ENCODE measurements at regions of chr20 and their contacts with region 1.

Region 1: GRCh38 chr20:56392282-56393137 is at the start of gene CSTF1:
- DNase-seq: peak; percentile 99 to 100
- H3K4me3 ChIP-seq: peak within 1 kb of the TSS; percentile 63 to 78
- H3K27ac ChIP-seq: peak within 1 kb of the TSS; percentile 87 to 90
- H3K4me1 ChIP-seq: peaks cover 0 to 17% of the 10 kb centered on the region in 2 donors
- H3K27me3 ChIP-seq: no peaks in the 10 kb centered on the region
- CTCF ChIP-seq: no peak
- total RNA-seq, gene CSTF1: 13.7 TPM

Region 2: DNA sequence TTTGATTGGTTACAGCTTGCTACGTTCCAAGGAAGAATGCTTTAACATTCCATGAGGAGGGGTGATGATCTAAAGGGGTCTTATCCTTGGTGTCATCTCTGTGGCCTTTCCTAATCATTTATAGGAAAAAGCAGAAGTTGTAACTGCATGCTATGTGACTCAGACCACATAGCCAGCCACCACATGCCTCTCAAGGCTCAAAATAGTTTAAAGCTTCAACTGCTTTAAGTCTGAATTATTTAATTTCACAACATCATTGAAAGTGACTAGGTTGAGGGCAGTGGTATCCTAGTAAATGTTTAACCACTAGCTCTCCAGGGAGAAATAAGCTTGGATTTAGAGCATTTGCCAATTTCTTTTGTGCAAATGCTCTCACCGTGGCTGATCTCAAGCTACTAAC is 114.3 kb before region 1 on chr20:
- intact Hi-C with region 1: no loop called
- DNase-seq: no peak
- H3K4me3 ChIP-seq: no peak overlapping the region
- H3K27ac ChIP-seq: no peak overlapping the region
- H3K4me1 ChIP-seq: no peaks in the 10 kb centered on the region
- H3K27me3 ChIP-seq: no peaks in the 10 kb centered on the region
- CTCF ChIP-seq: no peak

Region 3: DNA sequence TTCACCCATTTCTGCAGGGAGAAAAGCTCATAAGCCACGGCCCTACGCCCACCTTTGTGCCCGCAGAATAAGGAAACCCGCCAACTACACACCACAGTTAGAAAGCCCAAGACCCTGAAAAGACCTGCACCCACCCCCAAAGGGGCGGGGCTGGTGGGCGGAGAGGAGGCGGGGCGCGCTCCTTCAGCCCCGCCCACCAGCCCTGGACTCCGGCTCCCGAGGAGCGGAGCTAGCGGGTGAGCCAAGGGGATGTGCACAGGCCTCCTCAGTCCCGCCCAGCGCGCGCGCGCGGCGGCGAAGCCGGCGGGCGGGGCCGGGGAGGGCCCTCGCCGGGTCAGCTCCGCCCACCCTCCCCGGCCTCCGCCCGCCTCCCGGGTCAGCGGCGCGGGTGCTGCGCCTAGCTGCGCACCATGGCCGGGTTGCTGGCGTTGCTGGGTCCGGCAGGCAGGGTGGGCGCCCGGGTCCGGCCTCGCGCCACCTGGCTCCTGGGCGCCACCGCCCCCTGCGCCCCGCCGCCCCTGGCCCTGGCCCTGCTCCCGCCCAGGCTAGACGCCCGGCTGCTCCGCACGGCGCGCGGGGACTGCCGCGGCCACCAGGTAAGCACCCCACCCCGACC is 33.8 kb before region 1 on chr20 and contains the start of gene FAM210B:
- intact Hi-C with region 1: loop called (anchors 1 kb)
- DNase-seq: peak; percentile 31 to 92
- H3K4me3 ChIP-seq: peak within 1 kb of the TSS; percentile 90 to 93
- H3K27ac ChIP-seq: peak within 1 kb of the TSS; percentile 75 to 86
- H3K4me1 ChIP-seq: peaks cover 6 to 13% of the 10 kb centered on the region in 2 donors
- H3K27me3 ChIP-seq: no peaks in the 10 kb centered on the region
- CTCF ChIP-seq: no peak
- total RNA-seq, gene FAM210B: 17.9 TPM

Measured in ascending aorta (tissue), 2 donors.